ENCODE measurements at regions of chr1 and their contacts with region 1.

Region 1: DNA sequence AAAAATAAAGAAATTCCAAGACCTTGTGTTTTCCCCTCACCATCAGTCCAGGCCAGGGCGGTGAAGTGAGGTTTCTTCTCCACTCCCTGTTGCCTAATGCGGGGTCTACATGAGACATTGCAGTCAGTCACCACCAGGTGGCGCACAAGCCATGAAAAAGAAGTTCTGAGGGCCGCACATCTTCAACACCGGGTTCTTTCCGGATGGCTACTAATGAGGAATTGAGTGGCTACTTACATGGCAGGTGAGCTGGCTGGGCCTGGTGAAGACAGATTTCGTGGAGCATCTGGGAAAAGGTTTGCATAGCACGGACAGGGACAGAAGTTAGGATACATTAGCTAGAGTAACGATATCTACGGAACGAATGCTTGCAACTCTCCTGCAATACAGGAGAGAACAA is 15.8 kb upstream of the S100A11 start:
- DNase-seq: peak; percentile 91
- ATAC-seq: peak; percentile 49 to 56
- H3K4me3 ChIP-seq: no peak overlapping the region
- H3K27ac ChIP-seq: no peak overlapping the region
- H3K4me1 ChIP-seq: peaks cover 33% of the 10 kb centered on the region
- H3K27me3 ChIP-seq: no peaks in the 10 kb centered on the region
- CTCF ChIP-seq: peak; percentile 93

Region 2: DNA sequence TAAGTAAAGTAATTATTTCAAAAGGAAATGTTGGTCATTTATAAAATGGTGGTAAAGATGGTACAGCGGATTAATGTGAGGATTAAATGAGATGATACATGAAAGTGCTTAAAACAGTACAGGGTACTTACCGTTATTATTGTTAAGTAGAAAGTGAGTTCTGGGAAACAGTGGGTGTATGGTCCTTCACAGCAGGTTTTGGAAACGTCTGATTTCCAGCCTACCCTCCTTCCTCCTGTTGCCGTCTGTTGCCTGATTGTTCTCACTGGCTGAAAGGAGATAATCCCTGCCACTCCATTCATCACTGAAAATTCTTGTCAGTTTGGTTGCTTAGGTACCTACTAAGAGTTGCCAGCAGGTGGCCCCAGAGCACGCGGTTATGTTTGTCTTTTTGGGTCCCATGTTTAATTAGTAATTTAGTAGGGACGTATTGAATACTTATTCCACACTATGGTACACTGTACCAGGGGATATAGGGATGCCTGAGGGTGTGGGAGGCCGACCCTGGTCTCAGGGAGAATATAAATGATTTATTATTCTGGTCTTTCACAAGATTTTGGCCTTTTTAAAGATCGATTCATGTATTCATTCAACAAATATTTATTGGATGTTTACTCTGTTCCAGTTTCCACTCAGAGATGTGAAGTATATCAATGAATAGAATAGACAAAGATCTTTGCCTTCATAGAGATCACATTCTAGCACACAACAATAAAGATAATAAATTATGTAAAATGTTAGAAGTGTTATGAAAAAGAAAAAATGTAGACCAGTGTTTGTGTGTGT is 137.2 kb after region 1 on chr1:
- intact Hi-C with region 1: loop called (anchors 10 kb)
- DNase-seq: peak; percentile 74
- ATAC-seq: peak; percentile 75 to 79
- H3K4me3 ChIP-seq: peak overlapping the region; percentile 62
- H3K27ac ChIP-seq: peak overlapping the region; percentile 13
- H3K4me1 ChIP-seq: peaks cover 17% of the 10 kb centered on the region
- H3K27me3 ChIP-seq: no peaks in the 10 kb centered on the region
- CTCF ChIP-seq: peak; percentile 66

Measured in lower lobe of right lung (tissue), 2 donors.